HCT116 (cell line): ENCODE measurements at regions of chr20 and their contacts with region 1.

Region 1: GRCh38 chr20:21505161-21505809 is 8.6 kb downstream of the NKX2-2 start:
- DNase-seq: peak; percentile 28
- ATAC-seq: peak; percentile 60
- H3K4me3 ChIP-seq: peak overlapping the region; percentile 60 to 71
- H3K27ac ChIP-seq: peak overlapping the region; percentile 85
- H3K4me1 ChIP-seq: peaks cover 3 to 20% of the 10 kb centered on the region in 2 experiments; a peak in 3 of 4 replicates
- H3K27me3 ChIP-seq: no peaks in the 10 kb centered on the region
- CTCF ChIP-seq: peak; percentile 90 to 98 (median 95)
- POLR2A ChIP-seq: no peak
- RAD21 ChIP-seq: peak; percentile 96

Region 2: GRCh38 chr20:20664795-20665589 is 840.3 kb before region 1 on chr20:
- CTCF ChIA-PET with region 1: no interaction called
- POLR2A ChIA-PET with region 1: no interaction called
- RAD21 ChIA-PET with region 1: no interaction called
- intact Hi-C with region 1: loop called (anchors 10 kb)
- DNase-seq: peak; percentile 18
- ATAC-seq: peak; percentile 90
- H3K4me3 ChIP-seq: no peak overlapping the region
- H3K27ac ChIP-seq: no peak overlapping the region
- H3K4me1 ChIP-seq: no peaks in the 10 kb centered on the region
- H3K27me3 ChIP-seq: no peaks in the 10 kb centered on the region
- CTCF ChIP-seq: peak; percentile 38 to 52 (median 44); a peak in 5 of 6 replicates
- POLR2A ChIP-seq: no peak
- RAD21 ChIP-seq: peak; percentile 62

Region 3: DNA sequence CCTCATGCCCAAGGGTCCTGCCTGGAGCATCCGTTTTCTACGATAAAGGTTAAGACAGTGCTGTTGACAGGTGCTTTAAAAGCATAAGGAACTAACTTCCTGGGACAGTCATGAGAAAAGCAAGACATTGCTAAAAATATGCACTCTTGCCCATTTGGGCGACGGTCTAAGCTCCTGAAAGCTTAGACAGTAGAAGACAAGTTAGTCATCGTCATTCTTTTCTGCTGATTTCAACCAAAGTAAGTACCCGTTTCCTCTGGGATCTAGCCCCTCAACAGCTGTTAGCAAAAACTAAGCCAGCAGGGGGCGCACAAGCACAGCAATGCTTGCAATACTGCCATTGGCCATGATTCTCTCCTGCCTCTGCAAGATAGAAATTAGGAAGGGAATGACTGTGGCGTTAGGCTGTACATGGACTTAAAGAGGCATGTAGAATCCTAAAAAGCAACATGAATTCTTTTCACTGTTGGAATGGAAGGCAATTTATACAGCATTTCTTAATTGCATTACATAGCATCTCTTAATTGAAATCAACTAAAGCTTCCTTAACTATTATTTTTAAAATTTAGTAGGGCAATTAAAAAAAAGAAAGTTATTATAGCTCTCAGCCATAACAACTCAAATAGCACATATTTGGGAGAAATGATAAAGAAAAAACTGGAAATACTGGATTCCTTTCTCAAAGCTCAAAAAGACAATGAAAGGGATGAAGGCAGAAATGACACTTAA is 645.0 kb before region 1 on chr20:
- CTCF ChIA-PET with region 1: interaction called, 13 read pairs
- POLR2A ChIA-PET with region 1: interaction called, 4 read pairs
- RAD21 ChIA-PET with region 1: interaction called in 1 of 2 experiments, 3 read pairs
- intact Hi-C with region 1: loop called (anchors 1 kb)
- DNase-seq: peak; percentile 69
- ATAC-seq: peak; percentile 96
- H3K4me3 ChIP-seq: no peak overlapping the region
- H3K27ac ChIP-seq: no peak overlapping the region
- H3K4me1 ChIP-seq: no peaks in the 10 kb centered on the region
- H3K27me3 ChIP-seq: no peaks in the 10 kb centered on the region
- CTCF ChIP-seq: peak; percentile 80 to 99 (median 94)
- POLR2A ChIP-seq: no peak
- RAD21 ChIP-seq: peak; percentile 74

Region 4: DNA sequence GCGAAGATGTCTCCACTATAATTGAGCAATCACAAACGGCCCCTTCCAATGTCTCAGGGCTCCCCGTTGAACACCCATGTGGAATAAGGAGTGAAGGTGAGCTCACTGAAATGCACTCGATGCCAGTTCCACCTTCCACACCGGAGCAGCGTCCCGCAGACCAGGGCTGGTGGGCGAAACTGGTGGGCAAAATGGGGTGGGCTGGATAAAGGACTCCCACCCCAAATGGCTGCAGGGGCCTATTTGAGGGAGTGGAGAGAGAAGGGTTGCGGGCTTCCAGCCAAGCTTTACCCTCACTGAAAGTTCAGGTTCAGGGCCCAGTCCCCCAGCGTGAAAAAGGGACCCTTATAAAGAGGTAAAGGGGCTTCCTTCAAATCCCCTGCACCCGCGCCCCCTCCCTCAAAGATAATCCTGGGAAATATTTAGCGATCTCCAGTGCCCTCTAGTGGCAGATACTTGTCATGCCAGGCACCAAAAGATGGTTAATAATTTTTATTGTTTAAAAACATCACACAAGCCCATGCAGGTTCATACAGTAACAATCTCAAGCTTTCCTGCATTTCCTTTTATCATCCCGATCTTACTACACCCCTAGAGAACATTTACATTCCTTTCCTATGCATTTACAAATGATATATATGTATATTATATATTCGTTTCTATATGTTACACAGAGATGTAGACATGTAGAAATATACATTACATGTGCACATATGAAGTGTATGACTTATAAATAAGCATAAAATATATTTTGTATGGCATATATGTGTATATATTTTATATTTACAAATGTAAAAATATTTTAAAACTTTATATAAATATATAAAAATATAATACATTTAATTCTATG is 66.8 kb after region 1 on chr20:
- CTCF ChIA-PET with region 1: no interaction called
- POLR2A ChIA-PET with region 1: no interaction called
- RAD21 ChIA-PET with region 1: no interaction called
- intact Hi-C with region 1: loop called (anchors 5 kb)
- DNase-seq: no peak
- ATAC-seq: peak; percentile 25; the same call in 1 of the 2 replicates
- H3K4me3 ChIP-seq: no peak overlapping the region
- H3K27ac ChIP-seq: no peak overlapping the region
- H3K4me1 ChIP-seq: no peaks in the 10 kb centered on the region
- H3K27me3 ChIP-seq: peaks cover 24% of the 10 kb centered on the region
- CTCF ChIP-seq: peak; percentile 54 to 92 (median 77); a peak in 5 of 6 replicates
- POLR2A ChIP-seq: no peak
- RAD21 ChIP-seq: peak; percentile 68